CD4-positive, alpha-beta T cell (primary cell): ENCODE measurements at regions of chr2 and their contacts with region 1.

Region 1: DNA sequence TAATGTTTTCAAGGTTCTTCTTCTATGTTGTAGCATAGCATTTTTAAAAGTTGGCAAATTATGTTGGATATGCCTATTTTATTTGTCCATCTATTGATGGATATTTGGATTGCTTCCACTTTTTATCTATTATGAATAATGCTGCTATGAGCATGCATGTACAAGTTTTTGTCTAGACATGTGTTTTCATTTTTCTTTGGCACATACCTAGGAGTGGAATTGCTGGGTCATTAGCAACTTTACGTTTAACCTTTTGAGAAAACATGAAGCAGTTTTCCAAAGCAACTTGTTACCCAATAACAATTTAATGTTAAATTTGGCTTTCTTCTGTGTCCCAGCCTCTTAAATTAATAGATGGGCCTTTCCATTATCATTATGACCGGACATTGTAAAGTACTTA is 30.3 kb downstream of the DNAH6 start:
- DNase-seq: no peak
- ATAC-seq: no peak
- H3K4me3 ChIP-seq: no peak overlapping the region
- H3K4me3 Mint-ChIP-seq: no peak overlapping the region
- H3K27ac ChIP-seq: no peak overlapping the region
- H3K27ac Mint-ChIP-seq: no peak overlapping the region
- H3K4me1 ChIP-seq: no peaks in the 10 kb centered on the region
- H3K4me1 Mint-ChIP-seq: peaks cover 7% of the 10 kb centered on the region
- H3K27me3 ChIP-seq: no peaks in the 10 kb centered on the region
- H3K27me3 Mint-ChIP-seq: no peaks in the 10 kb centered on the region
- CTCF ChIP-seq: no peak

Region 2: GRCh38 chr2:84631047-84631446 is 84.5 kb after region 1 on chr2:
- CTCF ChIA-PET with region 1: no interaction called
- POLR2A ChIA-PET with region 1: no interaction called
- intact Hi-C with region 1: loop called in 1 of 2 experiments (anchors 5 kb)
- DNase-seq: peak in 3 of 14 experiments; percentile 62 to 68 (median 64)
- ATAC-seq: peak; percentile 70
- H3K4me3 ChIP-seq: no peak overlapping the region
- H3K4me3 Mint-ChIP-seq: no peak overlapping the region
- H3K27ac ChIP-seq: no peak overlapping the region
- H3K27ac Mint-ChIP-seq: no peak overlapping the region
- H3K4me1 ChIP-seq: peaks cover 10% of the 10 kb centered on the region
- H3K4me1 Mint-ChIP-seq: peaks cover 48% of the 10 kb centered on the region
- H3K27me3 ChIP-seq: no peaks in the 10 kb centered on the region
- H3K27me3 Mint-ChIP-seq: no peaks in the 10 kb centered on the region
- CTCF ChIP-seq: peak; percentile 67

Region 3: GRCh38 chr2:85369500-85369899 is 822.9 kb after region 1 on chr2:
- CTCF ChIA-PET with region 1: no interaction called
- POLR2A ChIA-PET with region 1: no interaction called
- intact Hi-C with region 1: no loop called
- DNase-seq: no peak
- ATAC-seq: no peak
- H3K4me3 ChIP-seq: no peak overlapping the region
- H3K4me3 Mint-ChIP-seq: no peak overlapping the region
- H3K27ac ChIP-seq: no peak overlapping the region
- H3K27ac Mint-ChIP-seq: no peak overlapping the region
- H3K4me1 ChIP-seq: no peaks in the 10 kb centered on the region
- H3K4me1 Mint-ChIP-seq: no peaks in the 10 kb centered on the region
- H3K27me3 ChIP-seq: no peaks in the 10 kb centered on the region
- H3K27me3 Mint-ChIP-seq: no peaks in the 10 kb centered on the region
- CTCF ChIP-seq: no peak